Activated naive CD4-positive, alpha-beta T cell treated with anti-CD3 and anti-CD28 coated beads for 36 hours (primary cell): ENCODE measurements at regions of chr2 and their contacts with region 1.

Region 1: GRCh38 chr2:226835796-226836547 is at the start of gene RHBDD1:
- DNase-seq: peak; percentile 93
- H3K4me3 Mint-ChIP-seq: peak within 1 kb of the TSS; percentile 92
- H3K27ac Mint-ChIP-seq: peak within 1 kb of the TSS; percentile 98
- H3K4me1 Mint-ChIP-seq: peaks cover 55% of the 10 kb centered on the region
- H3K27me3 Mint-ChIP-seq: no peaks in the 10 kb centered on the region
- total RNA-seq, gene RHBDD1: 42.6 to 43.3 TPM

Region 2: GRCh38 chr2:225041851-225042799 is 1793.8 kb before region 1 on chr2 and contains the start of gene DOCK10:
- CTCF ChIA-PET with region 1: no interaction called
- intact Hi-C with region 1: loop called (anchors 5 kb)
- DNase-seq: peak; percentile 60
- H3K4me3 Mint-ChIP-seq: peak within 1 kb of the TSS; percentile 85
- H3K27ac Mint-ChIP-seq: peak within 1 kb of the TSS; percentile 96
- H3K4me1 Mint-ChIP-seq: peaks cover 39% of the 10 kb centered on the region
- H3K27me3 Mint-ChIP-seq: no peaks in the 10 kb centered on the region
- total RNA-seq, gene DOCK10: 123 to 137 TPM

Region 3: GRCh38 chr2:226873051-226873620 is 37.2 kb after region 1 on chr2:
- CTCF ChIA-PET with region 1: interaction called, 3 read pairs
- intact Hi-C with region 1: loop called (anchors 1 kb)
- DNase-seq: peak; percentile 22
- H3K4me3 Mint-ChIP-seq: no peak overlapping the region
- H3K27ac Mint-ChIP-seq: peak overlapping the region; percentile 81
- H3K4me1 Mint-ChIP-seq: peaks cover 32% of the 10 kb centered on the region
- H3K27me3 Mint-ChIP-seq: no peaks in the 10 kb centered on the region

Region 4: DNA sequence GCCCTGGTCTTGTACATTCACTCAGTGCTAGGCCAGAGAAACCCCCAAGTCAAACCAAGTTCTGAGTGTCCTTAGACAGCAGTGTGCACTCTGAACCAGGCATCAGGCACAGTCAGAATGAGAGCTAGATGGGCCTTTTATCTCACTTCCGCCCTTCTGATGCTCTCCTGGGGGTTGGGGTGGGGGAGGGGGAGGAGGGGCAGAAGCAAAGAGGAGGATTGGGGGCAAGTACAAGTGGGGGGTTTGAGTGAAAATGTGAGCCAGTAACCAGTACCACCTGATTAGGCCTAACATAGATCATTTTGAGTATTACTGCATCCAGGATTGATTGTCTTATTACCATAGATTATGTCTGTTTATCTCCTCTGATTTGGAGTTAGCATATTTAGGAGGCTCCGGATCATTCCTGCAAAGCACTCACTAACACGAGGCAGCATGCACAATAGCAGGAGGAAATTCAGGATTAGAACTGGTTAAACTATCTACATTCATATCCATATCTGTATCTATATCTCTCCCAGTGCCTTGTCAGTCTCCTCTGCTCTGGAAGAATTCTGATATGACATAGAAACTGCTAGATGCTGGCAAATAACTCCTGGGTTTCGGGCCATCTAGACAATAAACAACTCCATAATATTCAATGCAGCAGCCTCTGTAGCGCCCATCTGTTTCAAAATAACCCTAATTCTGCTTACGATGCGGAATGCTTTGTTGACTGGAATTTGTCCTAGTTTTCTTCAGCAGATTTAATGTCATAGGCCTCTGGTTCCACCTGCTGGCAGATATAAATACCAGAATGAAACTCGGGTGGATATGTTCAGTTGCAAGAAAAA is 149.0 kb after region 1 on chr2:
- CTCF ChIA-PET with region 1: no interaction called
- intact Hi-C with region 1: loop called (anchors 1 kb)
- DNase-seq: peak; percentile 45
- H3K4me3 Mint-ChIP-seq: no peak overlapping the region
- H3K27ac Mint-ChIP-seq: no peak overlapping the region
- H3K4me1 Mint-ChIP-seq: peaks cover 19% of the 10 kb centered on the region
- H3K27me3 Mint-ChIP-seq: no peaks in the 10 kb centered on the region

Region 5: GRCh38 chr2:227370791-227371312 is 534.9 kb after region 1 on chr2:
- CTCF ChIA-PET with region 1: no interaction called
- intact Hi-C with region 1: loop called (anchors 5 kb)
- DNase-seq: peak; percentile 44
- H3K4me3 Mint-ChIP-seq: no peak overlapping the region
- H3K27ac Mint-ChIP-seq: peak overlapping the region; percentile 22
- H3K4me1 Mint-ChIP-seq: peaks cover 25% of the 10 kb centered on the region
- H3K27me3 Mint-ChIP-seq: no peaks in the 10 kb centered on the region

Region 6: DNA sequence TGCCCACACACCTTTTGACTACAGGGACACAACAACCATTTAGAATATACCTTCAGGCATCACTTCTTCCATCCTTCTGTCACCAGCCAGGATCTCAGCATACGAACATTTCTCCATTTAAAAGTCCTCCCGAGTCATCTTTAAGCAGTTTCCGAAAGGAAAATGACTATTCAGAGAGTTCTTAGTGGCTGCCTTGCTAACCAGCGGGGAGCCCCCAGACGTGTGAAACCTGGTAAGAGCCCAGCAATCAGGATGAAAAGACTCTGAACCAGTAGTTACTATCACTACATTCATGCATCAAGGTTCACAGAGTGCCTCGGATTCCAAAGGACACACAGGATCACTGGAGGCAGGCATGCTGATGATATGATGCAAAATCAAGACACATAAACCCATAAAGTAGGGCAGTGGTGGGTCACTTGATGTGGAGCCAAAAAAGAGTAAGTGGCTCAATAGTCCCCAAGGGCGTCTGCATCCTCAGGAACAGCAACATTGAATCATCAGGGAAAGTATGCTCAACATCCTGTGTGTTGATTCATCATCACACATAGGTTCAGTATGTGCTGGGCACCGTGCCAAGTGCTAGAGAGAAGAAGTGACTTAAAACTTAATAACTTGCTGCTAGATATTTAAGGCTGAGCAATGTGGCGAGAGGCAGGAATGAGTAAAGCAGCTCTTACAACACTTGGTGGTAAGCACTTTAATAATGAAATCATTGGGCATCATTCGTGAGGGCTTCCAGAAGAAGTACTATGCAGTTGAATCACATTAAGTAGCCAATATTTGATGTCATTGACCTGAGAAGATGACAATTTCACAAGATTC is 982.1 kb after region 1 on chr2:
- CTCF ChIA-PET with region 1: no interaction called
- intact Hi-C with region 1: loop called (anchors 1 kb)
- DNase-seq: peak; percentile 97
- H3K4me3 Mint-ChIP-seq: no peak overlapping the region
- H3K27ac Mint-ChIP-seq: peak overlapping the region; percentile 80
- H3K4me1 Mint-ChIP-seq: peaks cover 34% of the 10 kb centered on the region
- H3K27me3 Mint-ChIP-seq: peaks cover 11% of the 10 kb centered on the region